PC-9 (cell line): ENCODE measurements at regions of chr18 and their contacts with region 1.

Region 1: DNA sequence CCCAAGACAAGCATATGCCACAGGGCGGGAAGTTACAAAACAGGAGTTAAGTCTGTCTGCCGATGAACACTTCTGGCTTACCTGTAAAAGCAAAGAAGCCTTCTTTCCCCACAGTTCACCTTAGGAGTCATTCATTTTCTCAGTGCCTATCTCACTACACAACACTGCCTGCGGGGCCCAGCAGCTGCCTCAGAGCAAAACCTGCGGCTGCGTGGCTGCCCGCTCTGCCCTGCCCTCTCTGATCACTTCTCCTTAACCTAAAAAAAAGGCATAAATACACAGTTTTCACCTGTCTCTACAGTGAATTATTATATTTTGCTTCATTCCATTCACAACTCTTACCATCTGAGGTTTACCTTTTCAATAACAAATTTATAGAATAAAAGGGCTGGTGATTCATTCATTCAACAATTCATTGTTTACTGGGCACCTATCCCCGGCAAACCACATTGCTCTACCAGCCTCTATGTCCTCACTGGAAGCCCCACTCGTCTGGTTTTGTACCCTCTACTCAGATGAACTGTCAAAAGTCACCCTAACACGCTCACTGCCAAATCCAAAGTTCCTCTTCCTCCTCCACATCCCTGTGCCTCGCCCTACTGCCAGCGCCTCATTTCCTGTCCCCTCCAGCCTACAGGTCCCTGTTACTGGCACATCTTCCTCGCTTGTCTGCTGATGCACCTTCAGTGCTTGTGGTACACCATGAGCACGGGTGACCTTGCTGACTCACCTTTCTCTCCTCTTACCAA is 31.4 kb downstream of the AFG3L2 start:
- DNase-seq: no peak
- H3K4me3 ChIP-seq: no peak overlapping the region
- H3K27ac ChIP-seq: no peak overlapping the region
- H3K4me1 ChIP-seq: no peaks in the 10 kb centered on the region
- H3K27me3 ChIP-seq: no peaks in the 10 kb centered on the region
- CTCF ChIP-seq: no peak

Region 2: GRCh38 chr18:12262748-12263147 is 82.9 kb before region 1 on chr18:
- CTCF ChIA-PET with region 1: no interaction called
- POLR2A ChIA-PET with region 1: interaction called, 10 read pairs
- intact Hi-C with region 1: no loop called
- DNase-seq: no peak
- H3K4me3 ChIP-seq: no peak overlapping the region
- H3K27ac ChIP-seq: no peak overlapping the region
- H3K4me1 ChIP-seq: peaks cover 15% of the 10 kb centered on the region
- H3K27me3 ChIP-seq: no peaks in the 10 kb centered on the region
- CTCF ChIP-seq: no peak

Region 3: GRCh38 chr18:12420831-12421421 is 75.3 kb after region 1 on chr18:
- CTCF ChIA-PET with region 1: no interaction called
- POLR2A ChIA-PET with region 1: no interaction called
- intact Hi-C with region 1: no loop called
- DNase-seq: no peak
- H3K4me3 ChIP-seq: no peak overlapping the region
- H3K27ac ChIP-seq: no peak overlapping the region
- H3K4me1 ChIP-seq: no peaks in the 10 kb centered on the region
- H3K27me3 ChIP-seq: no peaks in the 10 kb centered on the region
- CTCF ChIP-seq: no peak

Region 4: DNA sequence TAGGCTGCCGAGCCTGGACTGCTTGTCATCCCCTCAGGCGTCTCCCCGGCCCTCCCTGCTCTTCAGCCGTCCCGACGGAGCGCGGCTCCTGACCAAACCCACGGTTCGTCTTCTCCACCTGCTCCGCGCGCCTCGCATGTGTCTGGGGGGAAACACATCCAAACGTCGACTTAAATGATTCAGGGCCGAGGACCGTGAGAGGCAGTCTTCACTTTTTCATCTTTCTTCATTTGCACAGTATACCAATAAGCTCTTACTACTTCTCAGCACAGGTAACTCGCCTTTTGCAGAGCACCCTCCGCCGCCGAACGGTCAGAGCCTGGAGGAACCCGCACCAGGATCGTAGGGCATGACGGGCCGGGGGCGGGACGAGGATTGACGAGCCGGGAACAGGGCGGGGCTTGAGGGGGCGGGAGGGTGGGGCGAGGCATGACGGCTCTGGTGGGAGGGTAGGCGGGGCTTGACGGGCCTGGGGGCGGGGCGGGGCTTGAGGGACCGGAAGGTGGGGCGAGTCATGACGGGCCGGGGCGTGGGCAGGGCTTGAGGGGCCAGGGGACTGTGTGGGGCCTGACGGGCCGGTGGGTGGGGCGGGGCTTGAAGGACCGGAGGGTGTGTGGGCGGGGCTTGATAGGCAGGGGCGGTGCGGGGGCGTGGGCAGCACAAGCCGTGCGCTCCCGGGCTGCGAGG is 601.8 kb after region 1 on chr18 and contains the start of gene SEH1L:
- CTCF ChIA-PET with region 1: no interaction called
- POLR2A ChIA-PET with region 1: interaction called, 11 read pairs
- intact Hi-C with region 1: no loop called
- DNase-seq: peak; percentile 81 to 98
- H3K4me3 ChIP-seq: peak within 1 kb of the TSS; percentile 98
- H3K27ac ChIP-seq: peak within 1 kb of the TSS; percentile 95
- H3K4me1 ChIP-seq: peaks cover 32% of the 10 kb centered on the region
- H3K27me3 ChIP-seq: no peaks in the 10 kb centered on the region
- CTCF ChIP-seq: no peak
- total RNA-seq, gene SEH1L: 98.3 and 101 TPM in 2 replicates